ENCODE measurements at regions of chr19 and their contacts with region 1.

Region 1: DNA sequence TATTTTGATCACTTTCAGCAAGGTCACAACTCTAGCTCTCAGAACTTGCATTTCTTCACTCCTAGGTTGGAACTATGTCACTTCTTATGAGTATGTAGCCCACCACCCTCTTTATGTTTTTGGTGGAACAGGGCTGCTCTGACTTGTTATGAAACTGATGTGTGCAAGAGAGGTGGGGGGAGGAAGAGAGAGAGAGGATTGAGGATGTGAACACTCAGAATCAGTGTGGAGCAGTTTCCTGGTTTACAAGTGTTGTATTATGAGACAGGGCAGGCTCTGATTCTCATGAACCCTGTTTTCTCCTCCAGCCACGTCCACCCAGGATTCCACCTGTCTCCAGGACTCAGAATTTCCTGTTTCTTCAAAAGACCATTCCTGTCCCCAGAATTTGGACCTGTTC is 16.1 kb downstream of the ZNF317 start:
- DNase-seq: no peak
- ATAC-seq: no peak
- H3K4me3 ChIP-seq: no peak overlapping the region
- H3K27ac ChIP-seq: no peak overlapping the region
- H3K4me1 ChIP-seq: no peaks in the 10 kb centered on the region
- H3K27me3 ChIP-seq: no peaks in the 10 kb centered on the region
- CTCF ChIP-seq: no peak
- EP300 ChIP-seq: no peak
- POLR2A ChIP-seq: no peak
- RAD21 ChIP-seq: no peak

Region 2: GRCh38 chr19:9130965-9131364 is 25.3 kb before region 1 on chr19:
- CTCF ChIA-PET with region 1: no interaction called
- POLR2A ChIA-PET with region 1: no interaction called
- in situ Hi-C with region 1: no loop called
- intact Hi-C with region 1: no loop called
- DNase-seq: no peak
- ATAC-seq: no peak
- H3K4me3 ChIP-seq: no peak overlapping the region
- H3K27ac ChIP-seq: no peak overlapping the region
- H3K4me1 ChIP-seq: no peaks in the 10 kb centered on the region
- H3K27me3 ChIP-seq: peaks cover 0 to 6% of the 10 kb centered on the region in 2 experiments; a peak in 2 of 5 replicates
- CTCF ChIP-seq: no peak
- EP300 ChIP-seq: no peak
- POLR2A ChIP-seq: no peak
- RAD21 ChIP-seq: no peak

Region 3: DNA sequence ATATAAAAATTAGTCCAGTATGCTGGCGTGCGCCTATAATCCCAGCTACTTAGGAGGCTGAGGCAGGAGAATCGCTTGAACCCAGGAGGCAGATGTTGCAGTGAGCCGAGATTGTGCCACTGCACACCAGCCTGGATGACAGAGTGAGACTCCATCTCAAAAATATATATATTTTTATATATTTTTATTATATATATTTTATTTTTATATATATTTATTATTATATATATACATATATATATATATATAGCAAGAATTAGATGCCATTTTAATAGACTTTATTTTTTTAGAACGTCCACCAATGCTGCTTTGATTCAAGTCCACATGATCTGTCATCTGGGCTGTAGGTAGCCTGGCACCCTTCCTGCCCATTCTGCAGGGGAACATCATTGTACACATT is 19.0 kb after region 1 on chr19:
- CTCF ChIA-PET with region 1: no interaction called
- POLR2A ChIA-PET with region 1: no interaction called
- in situ Hi-C with region 1: no loop called
- intact Hi-C with region 1: loop called (anchors 2 kb)
- DNase-seq: no peak
- ATAC-seq: no peak
- H3K4me3 ChIP-seq: no peak overlapping the region
- H3K27ac ChIP-seq: no peak overlapping the region
- H3K4me1 ChIP-seq: no peaks in the 10 kb centered on the region
- H3K27me3 ChIP-seq: no peaks in the 10 kb centered on the region
- CTCF ChIP-seq: no peak
- EP300 ChIP-seq: no peak
- POLR2A ChIP-seq: no peak
- RAD21 ChIP-seq: no peak